HEK293 (cell line): ENCODE measurements at regions of chr2 and their contacts with region 1.

Region 1: GRCh38 chr2:170324640-170325046 is 146.7 kb downstream of the MYO3B start:
- H3K4me3 ChIP-seq: no peak overlapping the region
- H3K27ac ChIP-seq: no peak overlapping the region
- H3K4me1 ChIP-seq: no peaks in the 10 kb centered on the region
- CTCF ChIP-seq: peak; percentile 79

Region 2: DNA sequence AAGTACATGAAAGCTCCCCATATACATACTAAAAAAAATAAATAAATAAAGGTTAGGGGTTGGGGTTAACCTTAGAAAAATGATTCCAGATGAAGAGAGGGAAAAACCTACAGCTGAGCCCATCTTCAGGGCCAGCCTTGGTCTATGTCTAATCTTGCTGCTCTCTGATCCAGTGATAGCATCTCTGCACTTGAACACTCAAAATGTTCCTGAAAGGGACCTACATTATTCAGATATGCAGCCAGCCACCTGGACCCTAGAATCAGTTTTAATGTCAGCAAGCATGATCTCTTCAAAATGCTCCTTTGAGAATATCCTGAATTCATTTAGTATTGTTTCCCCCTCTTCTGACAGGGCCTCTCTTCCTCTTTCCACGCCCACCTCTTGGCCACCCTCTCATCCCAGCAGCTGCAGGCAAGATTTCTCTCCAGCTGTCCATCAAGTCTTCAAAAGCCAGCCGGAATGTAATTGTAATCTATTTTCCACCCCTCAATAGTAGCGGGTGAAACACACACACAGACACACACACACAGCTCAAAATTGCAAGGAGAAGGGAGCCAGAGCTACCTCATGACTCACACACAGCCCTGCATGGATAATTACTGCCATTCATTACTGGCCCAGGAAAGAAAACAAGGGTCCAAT is 11.2 kb before region 1 on chr2:
- CTCF ChIA-PET with region 1: interaction called, 18 read pairs
- POLR2A ChIA-PET with region 1: no interaction called
- H3K4me3 ChIP-seq: no peak overlapping the region
- H3K27ac ChIP-seq: no peak overlapping the region; the same call in 1 of the 2 replicates
- H3K4me1 ChIP-seq: peaks cover 22% of the 10 kb centered on the region
- CTCF ChIP-seq: no peak